HEK293 (cell line): ENCODE measurements at regions of chr2 and their contacts with region 1.

Region 1: GRCh38 chr2:71331581-71332434 is at the start of gene ZNF638:
- H3K4me3 ChIP-seq: peak within 1 kb of the TSS; percentile 89
- H3K27ac ChIP-seq: peak within 1 kb of the TSS; percentile 76
- H3K4me1 ChIP-seq: peaks cover 16% of the 10 kb centered on the region
- CTCF ChIP-seq: peak; percentile 90

Region 2: GRCh38 chr2:71276311-71277146 is 55.3 kb before region 1 on chr2:
- CTCF ChIA-PET with region 1: interaction called, 5 read pairs
- POLR2A ChIA-PET with region 1: interaction called, 13 read pairs
- H3K4me3 ChIP-seq: peak overlapping the region; percentile 72
- H3K27ac ChIP-seq: peak overlapping the region; percentile 54; the same call in 1 of the 2 replicates
- H3K4me1 ChIP-seq: peaks cover 10% of the 10 kb centered on the region
- CTCF ChIP-seq: peak; percentile 55

Region 3: GRCh38 chr2:71291398-71291797 is 40.4 kb before region 1 on chr2:
- CTCF ChIA-PET with region 1: interaction called, 12 read pairs
- POLR2A ChIA-PET with region 1: no interaction called
- H3K4me3 ChIP-seq: no peak overlapping the region
- H3K27ac ChIP-seq: no peak overlapping the region
- H3K4me1 ChIP-seq: no peaks in the 10 kb centered on the region
- CTCF ChIP-seq: no peak